GM12878 (cell line): ENCODE measurements at regions of chr7 and their contacts with region 1.

Region 1: GRCh38 chr7:6272481-6273323 is at the start of gene CYTH3:
- DNase-seq: no peak
- ATAC-seq: peak; percentile 86
- H3K4me3 ChIP-seq: peak within 1 kb of the TSS; percentile 67
- H3K27ac ChIP-seq: no peak within 1 kb of the TSS; the same call in 1 of the 2 replicates
- H3K4me1 ChIP-seq: peaks cover 6% of the 10 kb centered on the region; the same call in 1 of the 2 replicates
- H3K27me3 ChIP-seq: no peaks in the 10 kb centered on the region
- CTCF ChIP-seq: no peak
- EP300 ChIP-seq: no peak
- POLR2A ChIP-seq: peak; percentile 81
- RAD21 ChIP-seq: peak; percentile 3; the same call in 1 of the 2 replicates
- polyA plus RNA-seq, gene CYTH3: 0.45 to 1.4 TPM

Region 2: GRCh38 chr7:6234384-6234783 is 38.3 kb before region 1 on chr7:
- CTCF ChIA-PET with region 1: interaction called, 18 read pairs
- POLR2A ChIA-PET with region 1: interaction called, 5 read pairs
- RAD21 ChIA-PET with region 1: interaction called, 5 read pairs
- SMC1A ChIA-PET with region 1: interaction called, 4 read pairs
- in situ Hi-C with region 1: no loop called
- intact Hi-C with region 1: no loop called
- DNase-seq: no peak
- ATAC-seq: peak; percentile 79
- H3K4me3 ChIP-seq: no peak overlapping the region
- H3K27ac ChIP-seq: peak overlapping the region; percentile 37; the same call in 1 of the 2 replicates
- H3K4me1 ChIP-seq: peaks cover 7% of the 10 kb centered on the region
- H3K27me3 ChIP-seq: no peaks in the 10 kb centered on the region
- CTCF ChIP-seq: no peak
- EP300 ChIP-seq: no peak
- POLR2A ChIP-seq: no peak
- RAD21 ChIP-seq: peak; percentile 23; the same call in 1 of the 2 replicates

Region 3: DNA sequence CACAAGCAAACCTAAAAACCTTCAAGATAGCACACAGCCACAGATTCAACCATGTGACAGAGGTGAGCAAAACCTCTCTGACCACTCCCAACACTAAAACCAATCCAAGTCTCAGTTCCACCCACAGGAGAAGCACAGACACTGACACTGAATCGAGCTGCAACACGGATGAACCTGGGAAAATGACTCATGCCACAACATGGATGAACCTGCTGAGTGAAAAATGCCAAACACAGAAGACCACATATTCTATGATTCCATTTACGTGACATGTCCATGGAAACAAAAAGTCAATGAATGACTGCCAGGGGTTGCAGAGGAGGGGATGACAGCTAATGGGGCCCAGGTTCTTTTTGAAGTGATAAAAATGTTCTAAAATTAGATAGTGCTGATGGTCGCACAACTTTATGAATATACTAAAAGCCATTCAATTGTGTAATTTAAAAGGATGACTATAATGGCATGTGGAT is 22.3 kb before region 1 on chr7:
- CTCF ChIA-PET with region 1: interaction called, 15 read pairs
- POLR2A ChIA-PET with region 1: interaction called, 30 read pairs
- RAD21 ChIA-PET with region 1: interaction called, 84 read pairs
- SMC1A ChIA-PET with region 1: interaction called, 141 read pairs
- in situ Hi-C with region 1: no loop called
- intact Hi-C with region 1: no loop called
- DNase-seq: peak; percentile 93
- ATAC-seq: peak; percentile 95
- H3K4me3 ChIP-seq: peak overlapping the region; percentile 15; the same call in 1 of the 2 replicates
- H3K27ac ChIP-seq: peak overlapping the region; percentile 77
- H3K4me1 ChIP-seq: peaks cover 17% of the 10 kb centered on the region
- H3K27me3 ChIP-seq: no peaks in the 10 kb centered on the region
- CTCF ChIP-seq: no peak
- EP300 ChIP-seq: peak; percentile 69 to 84; a peak in 3 of 4 replicates
- POLR2A ChIP-seq: no peak
- RAD21 ChIP-seq: peak; percentile 42; the same call in 1 of the 2 replicates

Region 4: GRCh38 chr7:6256677-6257535 is 15.8 kb before region 1 on chr7:
- CTCF ChIA-PET with region 1: interaction called, 82 read pairs
- POLR2A ChIA-PET with region 1: interaction called, 30 read pairs
- RAD21 ChIA-PET with region 1: interaction called, 84 read pairs
- SMC1A ChIA-PET with region 1: interaction called, 141 read pairs
- in situ Hi-C with region 1: no loop called
- intact Hi-C with region 1: loop called (anchors 2 kb)
- DNase-seq: peak; percentile 89
- ATAC-seq: peak; percentile 84
- H3K4me3 ChIP-seq: peak overlapping the region; percentile 37; the same call in 1 of the 2 replicates
- H3K27ac ChIP-seq: peak overlapping the region; percentile 92
- H3K4me1 ChIP-seq: peaks cover 17% of the 10 kb centered on the region
- H3K27me3 ChIP-seq: no peaks in the 10 kb centered on the region
- CTCF ChIP-seq: 0 out of 6 replicates have a peak, but pooled peaks of 1 of the 3 experiments have one; percentile 7
- EP300 ChIP-seq: peak; percentile 58 to 76; a peak in 3 of 4 replicates
- POLR2A ChIP-seq: peak; percentile 47
- RAD21 ChIP-seq: peak; percentile 42; the same call in 1 of the 2 replicates

Region 5: GRCh38 chr7:6262221-6262620 is 10.5 kb before region 1 on chr7:
- CTCF ChIA-PET with region 1: interaction called, 82 read pairs
- POLR2A ChIA-PET with region 1: interaction called, 30 read pairs
- RAD21 ChIA-PET with region 1: interaction called, 84 read pairs
- SMC1A ChIA-PET with region 1: interaction called, 141 read pairs
- in situ Hi-C with region 1: no loop called
- intact Hi-C with region 1: loop called (anchors 2 kb)
- DNase-seq: no peak
- ATAC-seq: no peak
- H3K4me3 ChIP-seq: no peak overlapping the region
- H3K27ac ChIP-seq: 0 out of 2 replicates have a peak overlapping the region, but pooled peaks have one; percentile 11
- H3K4me1 ChIP-seq: peaks cover 16% of the 10 kb centered on the region
- H3K27me3 ChIP-seq: no peaks in the 10 kb centered on the region
- CTCF ChIP-seq: no peak
- EP300 ChIP-seq: no peak
- POLR2A ChIP-seq: no peak
- RAD21 ChIP-seq: no peak

Region 6: GRCh38 chr7:6317797-6318438 is 45.2 kb after region 1 on chr7:
- CTCF ChIA-PET with region 1: interaction called, 14 read pairs
- POLR2A ChIA-PET with region 1: no interaction called
- RAD21 ChIA-PET with region 1: interaction called, 4 read pairs
- SMC1A ChIA-PET with region 1: interaction called, 3 read pairs
- in situ Hi-C with region 1: no loop called
- intact Hi-C with region 1: no loop called
- DNase-seq: no peak
- ATAC-seq: no peak
- H3K4me3 ChIP-seq: no peak overlapping the region
- H3K27ac ChIP-seq: no peak overlapping the region; the same call in 1 of the 2 replicates
- H3K4me1 ChIP-seq: 0 out of 2 replicates have a peak, but pooled peaks cover 2% of the 10 kb centered on the region
- H3K27me3 ChIP-seq: no peaks in the 10 kb centered on the region
- CTCF ChIP-seq: no peak
- EP300 ChIP-seq: no peak
- POLR2A ChIP-seq: no peak
- RAD21 ChIP-seq: no peak

Region 7: DNA sequence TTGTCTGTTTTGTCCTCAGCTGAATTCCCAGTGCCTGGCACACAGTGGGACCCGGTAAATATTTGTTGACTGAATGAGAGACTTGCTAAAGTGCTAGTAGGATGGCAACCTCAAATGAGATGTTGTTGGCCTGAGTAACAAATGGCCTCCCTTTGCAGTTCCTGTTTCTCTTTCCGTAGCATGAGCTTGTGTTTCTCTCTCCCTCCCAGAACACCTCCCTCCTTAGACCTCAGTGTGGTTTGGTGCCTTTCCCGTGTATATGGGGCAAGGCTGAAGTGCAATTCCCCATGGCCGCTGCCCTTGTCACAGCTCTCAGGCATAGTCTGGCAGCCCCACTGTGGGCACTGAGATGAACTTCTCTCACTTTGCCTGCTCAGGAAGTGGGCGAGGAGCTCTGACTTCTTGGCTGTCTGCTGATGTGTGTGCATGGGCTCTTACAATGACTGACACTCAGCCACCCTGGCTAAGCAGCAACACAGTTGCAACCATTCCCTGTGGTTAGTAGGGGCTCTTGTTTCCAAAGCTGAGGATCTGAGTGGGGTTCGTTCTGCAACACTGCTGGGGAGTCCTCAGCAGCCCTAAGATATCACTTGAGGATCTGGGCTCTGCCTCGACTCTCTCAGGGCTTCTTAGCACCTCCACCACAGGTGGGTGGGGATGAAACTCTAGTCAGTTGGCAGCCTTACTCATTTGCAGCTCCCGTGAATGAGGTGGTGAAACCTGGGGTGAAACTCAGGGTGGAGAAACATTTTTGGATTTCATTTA is 1853.2 kb after region 1 on chr7:
- CTCF ChIA-PET with region 1: no interaction called
- POLR2A ChIA-PET with region 1: no interaction called
- RAD21 ChIA-PET with region 1: no interaction called
- SMC1A ChIA-PET with region 1: no interaction called
- in situ Hi-C with region 1: loop called (anchors 25 kb)
- intact Hi-C with region 1: no loop called
- DNase-seq: peak; percentile 95
- ATAC-seq: peak; percentile 80
- H3K4me3 ChIP-seq: no peak overlapping the region; the same call in 1 of the 2 replicates
- H3K27ac ChIP-seq: peak overlapping the region; percentile 90
- H3K4me1 ChIP-seq: peaks cover 68% of the 10 kb centered on the region
- H3K27me3 ChIP-seq: no peaks in the 10 kb centered on the region
- CTCF ChIP-seq: no peak
- EP300 ChIP-seq: peak; percentile 66 to 81
- POLR2A ChIP-seq: peak; percentile 74
- RAD21 ChIP-seq: peak; percentile 25